ENCODE measurements at regions of chr4 and their contacts with region 1.

Region 1: GRCh38 chr4:36532670-36533379 is 251.4 kb downstream of the DTHD1 start:
- DNase-seq: no peak
- ATAC-seq: no peak

Region 2: DNA sequence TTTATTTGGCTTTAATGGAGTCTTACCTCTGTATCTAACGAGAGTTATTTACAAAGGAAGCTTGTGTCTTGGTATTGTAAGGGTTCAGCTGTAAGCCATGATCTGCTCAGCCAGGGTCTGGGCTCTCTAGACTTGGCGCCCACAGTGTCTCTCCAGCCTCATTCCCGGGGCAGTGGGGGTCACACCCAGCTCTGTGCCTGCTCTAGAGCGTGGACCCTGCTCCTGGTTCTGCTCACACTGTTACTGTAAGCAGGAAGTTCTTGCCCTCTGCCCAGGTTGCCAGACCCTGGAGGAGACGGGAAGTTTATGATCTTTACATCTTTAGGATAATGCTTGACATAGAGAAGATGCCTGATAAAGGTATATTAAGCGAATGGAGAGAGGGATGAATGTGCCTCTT is 1663.1 kb after region 1 on chr4:
- intact Hi-C with region 1: loop called (anchors 5 kb)
- DNase-seq: no peak
- ATAC-seq: no peak